ENCODE measurements at regions of chr11 and their contacts with region 1.

Region 1: GRCh38 chr11:74702383-74703007 is 28.7 kb downstream of the CHRDL2 start:
- DNase-seq: peak; percentile 51
- H3K4me3 ChIP-seq: no peak overlapping the region
- H3K27ac ChIP-seq: no peak overlapping the region
- H3K27me3 ChIP-seq: peaks cover 2% of the 10 kb centered on the region
- CTCF ChIP-seq: peak; percentile 99

Region 2: GRCh38 chr11:74634537-74634936 is 68.0 kb before region 1 on chr11:
- CTCF ChIA-PET with region 1: interaction called, 10 read pairs
- POLR2A ChIA-PET with region 1: interaction called, 3 read pairs
- DNase-seq: no peak
- H3K4me3 ChIP-seq: no peak overlapping the region
- H3K27ac ChIP-seq: no peak overlapping the region
- H3K27me3 ChIP-seq: no peaks in the 10 kb centered on the region
- CTCF ChIP-seq: peak; percentile 44

Region 3: GRCh38 chr11:74683279-74683871 is 19.1 kb before region 1 on chr11:
- CTCF ChIA-PET with region 1: interaction called, 61 read pairs
- POLR2A ChIA-PET with region 1: no interaction called
- DNase-seq: no peak
- H3K4me3 ChIP-seq: no peak overlapping the region
- H3K27ac ChIP-seq: no peak overlapping the region
- H3K27me3 ChIP-seq: no peaks in the 10 kb centered on the region
- CTCF ChIP-seq: peak; percentile 47

Region 4: DNA sequence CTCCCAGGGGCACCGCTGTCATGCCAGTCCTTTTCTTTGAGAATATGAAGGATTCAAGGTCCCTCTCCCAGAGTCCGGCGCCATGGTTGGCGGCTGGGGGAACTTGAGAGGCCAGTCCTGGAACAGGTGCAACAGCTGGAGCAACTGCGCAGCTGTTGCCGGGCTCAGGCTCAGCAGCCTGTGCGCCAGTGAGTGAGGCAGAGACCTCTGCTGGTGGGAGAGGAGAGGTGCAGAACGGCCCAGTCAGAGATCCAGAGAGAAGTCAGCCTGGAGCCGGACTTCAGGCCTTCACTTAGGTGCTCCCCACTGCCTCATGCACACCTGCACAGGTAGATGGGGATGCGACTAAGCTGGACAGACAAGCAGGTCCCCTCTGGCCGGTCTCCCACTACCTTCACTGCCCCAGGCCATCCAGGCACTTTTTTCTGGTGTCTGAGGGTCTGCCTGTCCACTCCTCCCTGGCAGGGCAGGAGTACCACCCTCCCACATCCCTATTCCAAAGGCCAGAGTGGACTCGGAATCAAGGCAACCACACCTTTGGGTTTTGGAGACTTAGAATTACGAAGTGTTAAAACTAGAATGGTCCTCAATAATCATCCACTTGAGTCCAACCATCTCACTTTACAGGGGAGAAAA is 24.2 kb after region 1 on chr11:
- CTCF ChIA-PET with region 1: interaction called, 140 read pairs
- POLR2A ChIA-PET with region 1: interaction called, 9 read pairs
- DNase-seq: peak; percentile 75
- H3K4me3 ChIP-seq: no peak overlapping the region
- H3K27ac ChIP-seq: no peak overlapping the region
- H3K27me3 ChIP-seq: peaks cover 27% of the 10 kb centered on the region
- CTCF ChIP-seq: peak; percentile 99

Region 5: GRCh38 chr11:74988541-74989260 is 286.2 kb after region 1 on chr11 and contains the start of gene NEU3:
- CTCF ChIA-PET with region 1: interaction called, 10 read pairs
- POLR2A ChIA-PET with region 1: no interaction called
- DNase-seq: peak; percentile 29
- H3K4me3 ChIP-seq: peak within 1 kb of the TSS; percentile 79
- H3K27ac ChIP-seq: peak within 1 kb of the TSS; percentile 66
- H3K27me3 ChIP-seq: no peaks in the 10 kb centered on the region
- CTCF ChIP-seq: no peak
- polyA plus RNA-seq, gene NEU3: 5.6 and 5.7 TPM in 2 replicates

Region 6: GRCh38 chr11:75406338-75406777 is 703.9 kb after region 1 on chr11:
- CTCF ChIA-PET with region 1: no interaction called
- POLR2A ChIA-PET with region 1: no interaction called
- DNase-seq: no peak
- H3K4me3 ChIP-seq: no peak overlapping the region
- H3K27ac ChIP-seq: no peak overlapping the region
- H3K27me3 ChIP-seq: no peaks in the 10 kb centered on the region
- CTCF ChIP-seq: no peak